Common myeloid progenitor, CD34-positive (primary cell): ENCODE measurements at regions of chr2 and their contacts with region 1.

Region 1: GRCh38 chr2:100381240-100381639 is 36.2 kb downstream of the CHST10 start:
- DNase-seq: peak; percentile 80 to 92 (median 88)
- H3K4me3 ChIP-seq: no peak overlapping the region
- H3K27ac ChIP-seq: no peak overlapping the region
- H3K4me1 ChIP-seq: no peaks in the 10 kb centered on the region
- H3K27me3 ChIP-seq: no peaks in the 10 kb centered on the region

Region 2: GRCh38 chr2:100391735-100392515 is 10.7 kb after region 1 on chr2:
- CTCF ChIA-PET with region 1: interaction called, 22 read pairs
- POLR2A ChIA-PET with region 1: no interaction called
- DNase-seq: no peak
- H3K4me3 ChIP-seq: no peak overlapping the region
- H3K27ac ChIP-seq: no peak overlapping the region
- H3K4me1 ChIP-seq: no peaks in the 10 kb centered on the region
- H3K27me3 ChIP-seq: no peaks in the 10 kb centered on the region